B cell (primary cell): ENCODE measurements at regions of chr21 and their contacts with region 1.

Region 1: GRCh38 chr21:33441489-33442477 is 38.0 kb downstream of the TMEM50B start:
- DNase-seq: peak; percentile 77
- ATAC-seq: peak; percentile 93
- H3K4me3 ChIP-seq: peak overlapping the region in 1 of 5 experiments; percentile 38
- H3K4me3 Mint-ChIP-seq: peak overlapping the region; percentile 71
- H3K27ac ChIP-seq: peak overlapping the region; percentile 88
- H3K27ac Mint-ChIP-seq: peak overlapping the region; percentile 96
- H3K4me1 ChIP-seq: peaks cover 56 to 65% of the 10 kb centered on the region in 2 donors
- H3K4me1 Mint-ChIP-seq: peaks cover 55% of the 10 kb centered on the region
- H3K27me3 ChIP-seq: no peaks in the 10 kb centered on the region
- H3K27me3 Mint-ChIP-seq: no peaks in the 10 kb centered on the region
- CTCF ChIP-seq: no peak

Region 2: GRCh38 chr21:32921632-32922230 is 520.1 kb before region 1 on chr21:
- CTCF ChIA-PET with region 1: interaction called, 13 read pairs
- POLR2A ChIA-PET with region 1: interaction called, 3 read pairs
- intact Hi-C with region 1: loop called (anchors 1 kb)
- DNase-seq: peak; percentile 58
- ATAC-seq: no peak
- H3K4me3 ChIP-seq: no peak overlapping the region
- H3K4me3 Mint-ChIP-seq: no peak overlapping the region
- H3K27ac ChIP-seq: no peak overlapping the region
- H3K27ac Mint-ChIP-seq: no peak overlapping the region
- H3K4me1 ChIP-seq: no peaks in the 10 kb centered on the region
- H3K4me1 Mint-ChIP-seq: no peaks in the 10 kb centered on the region
- H3K27me3 ChIP-seq: peaks cover 0 to 5% (median 2%) of the 10 kb centered on the region in 4 experiments
- H3K27me3 Mint-ChIP-seq: peaks cover 32% of the 10 kb centered on the region
- CTCF ChIP-seq: peak; percentile 77

Region 3: DNA sequence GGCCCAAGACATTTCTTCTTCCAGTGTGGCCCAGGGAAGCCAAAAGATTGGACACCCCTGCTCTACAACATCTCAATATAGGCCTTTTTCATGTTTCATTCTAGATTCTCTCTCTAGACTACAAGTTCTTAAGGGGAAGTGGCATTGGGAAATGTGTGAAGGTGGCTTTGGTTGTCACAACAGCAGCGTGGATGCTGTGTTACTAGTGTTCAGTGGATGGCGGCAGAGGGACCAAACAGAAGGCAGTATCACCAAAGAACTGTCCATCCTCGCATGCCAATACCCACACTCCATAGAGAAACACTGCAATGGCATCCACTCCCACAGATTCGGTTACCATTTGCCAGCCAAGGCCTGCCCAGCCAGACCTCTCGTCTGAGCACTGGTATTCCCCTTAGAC is 236.3 kb before region 1 on chr21:
- CTCF ChIA-PET with region 1: interaction called, 61 read pairs
- POLR2A ChIA-PET with region 1: interaction called, 3 read pairs
- intact Hi-C with region 1: no loop called
- DNase-seq: peak; percentile 55
- ATAC-seq: peak; percentile 33
- H3K4me3 ChIP-seq: peak overlapping the region in 3 of 5 experiments; percentile 9 to 37 (median 36)
- H3K4me3 Mint-ChIP-seq: peak overlapping the region; percentile 76
- H3K27ac ChIP-seq: peak overlapping the region; percentile 70 to 79
- H3K27ac Mint-ChIP-seq: peak overlapping the region; percentile 89
- H3K4me1 ChIP-seq: peaks cover 48 to 51% of the 10 kb centered on the region in 2 donors
- H3K4me1 Mint-ChIP-seq: peaks cover 53% of the 10 kb centered on the region
- H3K27me3 ChIP-seq: no peaks in the 10 kb centered on the region
- H3K27me3 Mint-ChIP-seq: no peaks in the 10 kb centered on the region
- CTCF ChIP-seq: no peak

Region 4: DNA sequence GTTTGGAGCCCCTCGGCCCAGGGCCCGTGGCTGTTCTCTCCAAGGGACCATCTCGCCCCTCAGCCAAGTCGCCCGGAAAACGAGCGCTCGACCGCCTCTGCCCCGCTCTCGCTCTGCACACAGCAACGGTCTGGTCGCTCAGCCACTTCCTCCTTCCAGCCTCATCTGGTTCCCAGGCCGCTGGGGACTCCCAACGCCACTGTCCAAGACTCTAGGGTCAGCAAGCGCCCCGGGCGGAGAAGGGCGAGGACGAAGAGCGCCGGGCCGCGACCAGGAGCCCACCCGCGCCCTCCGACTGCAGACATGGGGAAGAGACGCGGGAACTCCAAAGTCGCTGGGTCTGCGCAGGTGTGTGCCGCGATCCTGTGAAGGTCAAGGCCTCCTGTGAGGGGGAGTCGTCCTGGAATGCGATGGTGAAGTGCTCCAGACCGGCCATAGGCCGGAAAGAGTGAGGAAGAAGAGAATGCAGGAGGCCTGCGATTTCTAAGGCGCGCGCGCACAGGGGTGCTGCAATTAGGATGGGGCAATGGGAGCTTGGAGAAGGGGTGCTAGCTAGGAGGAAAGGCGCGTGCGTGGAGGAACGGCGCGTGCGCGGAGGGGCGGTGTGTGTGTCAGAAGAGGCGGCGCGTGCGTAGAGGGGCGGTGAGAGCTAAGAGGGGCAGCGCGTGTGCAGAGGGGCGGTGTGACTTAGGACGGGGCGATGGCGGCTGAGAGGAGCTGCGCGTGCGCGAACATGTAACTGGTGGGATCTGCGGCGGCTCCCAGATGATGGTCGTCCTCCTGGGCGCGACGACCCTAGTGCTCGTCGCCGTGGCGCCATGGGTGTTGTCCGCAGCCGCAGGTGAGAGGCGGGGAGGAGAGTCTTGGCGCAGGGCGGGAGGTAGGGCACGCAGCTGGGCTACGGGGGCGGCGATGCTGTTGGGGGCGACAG is 117.2 kb before region 1 on chr21 and contains the start of gene IFNAR1:
- CTCF ChIA-PET with region 1: interaction called, 23 read pairs
- POLR2A ChIA-PET with region 1: interaction called, 6 read pairs
- intact Hi-C with region 1: loop called (anchors 1 kb)
- DNase-seq: peak; percentile 99
- ATAC-seq: peak; percentile 81
- H3K4me3 ChIP-seq: peak within 1 kb of the TSS; percentile 83 to 98 (median 97)
- H3K4me3 Mint-ChIP-seq: no peak within 1 kb of the TSS
- H3K27ac ChIP-seq: peak within 1 kb of the TSS; percentile 91 to 97
- H3K27ac Mint-ChIP-seq: no peak within 1 kb of the TSS
- H3K4me1 ChIP-seq: peaks cover 28 to 35% of the 10 kb centered on the region in 2 donors
- H3K4me1 Mint-ChIP-seq: peaks cover 30% of the 10 kb centered on the region
- H3K27me3 ChIP-seq: no peaks in the 10 kb centered on the region
- H3K27me3 Mint-ChIP-seq: no peaks in the 10 kb centered on the region
- CTCF ChIP-seq: no peak
- total RNA-seq, gene IFNAR1: 55.7 and 57.7 TPM in 2 replicates

Region 5: DNA sequence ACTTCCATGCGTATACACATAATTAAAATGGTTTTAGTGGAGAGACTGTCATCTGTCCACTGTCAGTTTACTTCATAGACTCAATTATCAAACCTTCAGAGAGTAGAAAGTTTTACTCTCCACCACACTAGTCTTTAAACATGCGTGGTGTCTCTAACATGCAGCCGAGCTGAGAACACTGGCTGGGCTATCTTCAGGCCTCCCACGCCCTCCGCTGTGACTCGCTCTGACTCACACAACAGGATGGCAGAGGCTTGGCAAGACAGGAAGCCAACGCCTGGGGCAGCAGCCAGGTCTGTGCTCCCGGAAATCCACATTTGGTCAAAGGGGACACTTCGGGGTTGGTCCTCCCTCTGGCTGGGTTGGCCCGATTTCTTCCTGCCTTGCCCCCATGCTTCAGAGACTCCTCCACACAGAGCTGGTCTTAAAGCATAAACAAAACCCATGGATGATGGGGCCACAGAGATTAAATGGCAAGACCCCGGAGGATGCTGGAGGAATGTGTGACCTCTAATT is 61.2 kb before region 1 on chr21:
- CTCF ChIA-PET with region 1: interaction called, 10 read pairs
- POLR2A ChIA-PET with region 1: interaction called, 5 read pairs
- intact Hi-C with region 1: no loop called
- DNase-seq: peak; percentile 79
- ATAC-seq: peak; percentile 59
- H3K4me3 ChIP-seq: peak overlapping the region in 1 of 5 experiments; percentile 23
- H3K4me3 Mint-ChIP-seq: peak overlapping the region; percentile 85
- H3K27ac ChIP-seq: peak overlapping the region; percentile 96
- H3K27ac Mint-ChIP-seq: peak overlapping the region; percentile 95
- H3K4me1 ChIP-seq: peaks cover 77 to 91% of the 10 kb centered on the region in 2 donors
- H3K4me1 Mint-ChIP-seq: peaks cover 82% of the 10 kb centered on the region
- H3K27me3 ChIP-seq: no peaks in the 10 kb centered on the region
- H3K27me3 Mint-ChIP-seq: no peaks in the 10 kb centered on the region
- CTCF ChIP-seq: no peak

Region 6: GRCh38 chr21:33403779-33404585 is 37.8 kb before region 1 on chr21:
- CTCF ChIA-PET with region 1: interaction called, 28 read pairs
- POLR2A ChIA-PET with region 1: interaction called, 9 read pairs
- intact Hi-C with region 1: loop called (anchors 2 kb)
- DNase-seq: peak; percentile 67
- ATAC-seq: peak; percentile 39
- H3K4me3 ChIP-seq: peak overlapping the region; percentile 85 to 94 (median 91)
- H3K4me3 Mint-ChIP-seq: peak overlapping the region; percentile 100
- H3K27ac ChIP-seq: peak overlapping the region; percentile 75 to 83
- H3K27ac Mint-ChIP-seq: peak overlapping the region; percentile 99
- H3K4me1 ChIP-seq: peaks cover 59 to 81% of the 10 kb centered on the region in 2 donors
- H3K4me1 Mint-ChIP-seq: peaks cover 71% of the 10 kb centered on the region
- H3K27me3 ChIP-seq: no peaks in the 10 kb centered on the region
- H3K27me3 Mint-ChIP-seq: no peaks in the 10 kb centered on the region
- CTCF ChIP-seq: no peak

Region 7: DNA sequence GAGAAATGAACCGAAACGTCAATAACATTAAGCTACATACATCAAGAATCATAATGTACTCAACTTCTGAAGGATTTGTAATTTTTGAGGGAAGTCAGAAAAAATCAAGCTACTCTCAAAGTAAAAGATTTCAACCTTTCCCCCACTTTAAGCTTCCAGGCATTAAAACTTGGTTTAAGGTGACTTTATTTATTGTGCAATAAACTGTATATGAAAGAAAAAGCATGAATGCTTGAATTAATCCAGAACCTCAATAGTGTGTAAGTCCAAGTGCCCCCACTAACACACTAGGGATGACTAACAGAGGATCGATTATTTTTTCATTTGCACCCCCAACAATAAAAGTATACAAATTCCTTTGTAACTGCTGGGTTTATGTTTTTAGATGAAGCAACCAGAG is 89.2 kb after region 1 on chr21:
- CTCF ChIA-PET with region 1: no interaction called
- POLR2A ChIA-PET with region 1: no interaction called
- intact Hi-C with region 1: no loop called
- DNase-seq: no peak
- ATAC-seq: no peak
- H3K4me3 ChIP-seq: no peak overlapping the region
- H3K4me3 Mint-ChIP-seq: no peak overlapping the region
- H3K27ac ChIP-seq: no peak overlapping the region
- H3K27ac Mint-ChIP-seq: no peak overlapping the region
- H3K4me1 ChIP-seq: no peaks in the 10 kb centered on the region
- H3K4me1 Mint-ChIP-seq: no peaks in the 10 kb centered on the region
- H3K27me3 ChIP-seq: no peaks in the 10 kb centered on the region
- H3K27me3 Mint-ChIP-seq: no peaks in the 10 kb centered on the region
- CTCF ChIP-seq: no peak

Region 8: DNA sequence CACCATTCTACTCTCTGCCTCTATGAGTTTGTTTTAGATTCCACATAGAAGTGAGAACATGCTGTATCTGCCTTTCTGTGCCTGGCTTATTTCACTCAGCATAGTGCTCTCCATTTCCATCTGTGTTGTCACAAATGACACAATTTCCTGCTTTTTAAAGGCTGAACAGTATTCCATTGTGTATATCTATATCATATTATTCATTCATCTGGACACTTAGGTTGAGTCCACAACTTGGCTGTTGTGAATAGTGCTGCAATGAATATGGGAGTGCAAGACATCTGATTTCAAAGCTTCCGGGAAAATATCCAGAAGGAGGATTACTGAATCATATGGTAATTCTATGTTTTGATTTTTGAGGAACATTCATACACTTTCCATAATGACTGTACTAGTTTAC is 166.8 kb after region 1 on chr21:
- CTCF ChIA-PET with region 1: interaction called, 20 read pairs
- POLR2A ChIA-PET with region 1: no interaction called
- intact Hi-C with region 1: no loop called
- DNase-seq: no peak
- ATAC-seq: no peak
- H3K4me3 ChIP-seq: no peak overlapping the region
- H3K4me3 Mint-ChIP-seq: no peak overlapping the region
- H3K27ac ChIP-seq: no peak overlapping the region
- H3K27ac Mint-ChIP-seq: no peak overlapping the region
- H3K4me1 ChIP-seq: no peaks in the 10 kb centered on the region
- H3K4me1 Mint-ChIP-seq: no peaks in the 10 kb centered on the region
- H3K27me3 ChIP-seq: no peaks in the 10 kb centered on the region
- H3K27me3 Mint-ChIP-seq: no peaks in the 10 kb centered on the region
- CTCF ChIP-seq: no peak